ENCODE measurements at regions of chr19 and their contacts with region 1.

Region 1: GRCh38 chr19:21396893-21397572 is at the start of gene ZNF493:
- DNase-seq: peak; percentile 99
- H3K4me3 Mint-ChIP-seq: peak within 1 kb of the TSS; percentile 93
- H3K27ac Mint-ChIP-seq: peak within 1 kb of the TSS; percentile 84
- H3K4me1 Mint-ChIP-seq: no peaks in the 10 kb centered on the region
- H3K27me3 Mint-ChIP-seq: no peaks in the 10 kb centered on the region
- CTCF ChIP-seq: no peak
- total RNA-seq, gene ZNF493: 8.7 and 12.4 TPM in 2 replicates

Region 2: DNA sequence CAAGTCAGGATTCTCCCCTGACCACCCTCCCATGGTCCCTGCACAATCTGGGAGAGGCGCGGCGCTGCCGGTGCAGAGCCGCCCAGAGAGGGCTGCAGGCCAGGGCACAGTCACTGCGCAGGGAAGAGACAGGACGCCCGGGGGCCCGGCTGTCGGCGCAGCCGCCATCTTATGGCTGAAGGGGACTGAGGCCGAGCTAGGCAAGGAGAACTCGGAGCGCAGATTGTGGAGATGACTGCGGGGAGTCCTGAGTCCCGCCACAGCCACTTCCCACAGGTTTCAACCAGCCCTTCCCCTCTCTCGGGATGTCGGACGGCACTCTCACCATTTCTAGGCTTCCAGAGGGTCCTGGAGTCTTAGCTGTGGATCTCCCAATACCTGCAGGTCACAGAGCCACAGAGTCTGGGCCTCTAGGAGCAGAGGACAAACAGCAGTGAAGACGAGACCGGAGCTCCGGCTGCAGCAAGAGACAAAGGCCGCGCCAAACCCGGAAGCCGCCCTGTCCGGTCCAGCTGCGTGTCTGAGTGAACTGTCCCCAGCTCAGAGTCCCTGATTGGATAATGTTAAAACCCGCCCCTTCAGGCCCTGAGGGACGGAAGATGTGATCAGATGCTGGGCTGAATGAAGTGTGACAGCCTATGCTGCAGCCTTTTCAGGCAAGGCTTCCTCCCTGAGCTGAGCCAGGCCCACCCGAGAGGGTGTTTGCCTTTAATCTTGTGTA is 68.0 kb before region 1 on chr19 and contains the start of gene ZNF708:
- CTCF ChIA-PET with region 1: interaction called, 5 read pairs
- POLR2A ChIA-PET with region 1: interaction called, 39 read pairs
- intact Hi-C with region 1: no loop called
- DNase-seq: peak; percentile 94
- H3K4me3 Mint-ChIP-seq: peak within 1 kb of the TSS; percentile 98
- H3K27ac Mint-ChIP-seq: peak within 1 kb of the TSS; percentile 99
- H3K4me1 Mint-ChIP-seq: peaks cover 5% of the 10 kb centered on the region
- H3K27me3 Mint-ChIP-seq: no peaks in the 10 kb centered on the region
- CTCF ChIP-seq: no peak
- total RNA-seq, gene ZNF708: 5.3 and 7.8 TPM in 2 replicates

Region 3: GRCh38 chr19:21358768-21359451 is 38.1 kb before region 1 on chr19 and contains the start of gene ZNF738:
- CTCF ChIA-PET with region 1: interaction called, 3 read pairs
- POLR2A ChIA-PET with region 1: interaction called, 27 read pairs
- intact Hi-C with region 1: no loop called
- DNase-seq: peak; percentile 92
- H3K4me3 Mint-ChIP-seq: peak within 1 kb of the TSS; percentile 81
- H3K27ac Mint-ChIP-seq: peak within 1 kb of the TSS; percentile 61
- H3K4me1 Mint-ChIP-seq: no peaks in the 10 kb centered on the region
- H3K27me3 Mint-ChIP-seq: no peaks in the 10 kb centered on the region
- CTCF ChIP-seq: no peak
- total RNA-seq, gene ZNF738: 3.4 and 4.3 TPM in 2 replicates

Region 4: GRCh38 chr19:21410166-21410565 is 13.1 kb after region 1 on chr19:
- CTCF ChIA-PET with region 1: interaction called, 4 read pairs
- POLR2A ChIA-PET with region 1: interaction called, 10 read pairs
- intact Hi-C with region 1: no loop called
- DNase-seq: no peak
- H3K4me3 Mint-ChIP-seq: no peak overlapping the region
- H3K27ac Mint-ChIP-seq: no peak overlapping the region
- H3K4me1 Mint-ChIP-seq: no peaks in the 10 kb centered on the region
- H3K27me3 Mint-ChIP-seq: no peaks in the 10 kb centered on the region
- CTCF ChIP-seq: no peak

Region 5: DNA sequence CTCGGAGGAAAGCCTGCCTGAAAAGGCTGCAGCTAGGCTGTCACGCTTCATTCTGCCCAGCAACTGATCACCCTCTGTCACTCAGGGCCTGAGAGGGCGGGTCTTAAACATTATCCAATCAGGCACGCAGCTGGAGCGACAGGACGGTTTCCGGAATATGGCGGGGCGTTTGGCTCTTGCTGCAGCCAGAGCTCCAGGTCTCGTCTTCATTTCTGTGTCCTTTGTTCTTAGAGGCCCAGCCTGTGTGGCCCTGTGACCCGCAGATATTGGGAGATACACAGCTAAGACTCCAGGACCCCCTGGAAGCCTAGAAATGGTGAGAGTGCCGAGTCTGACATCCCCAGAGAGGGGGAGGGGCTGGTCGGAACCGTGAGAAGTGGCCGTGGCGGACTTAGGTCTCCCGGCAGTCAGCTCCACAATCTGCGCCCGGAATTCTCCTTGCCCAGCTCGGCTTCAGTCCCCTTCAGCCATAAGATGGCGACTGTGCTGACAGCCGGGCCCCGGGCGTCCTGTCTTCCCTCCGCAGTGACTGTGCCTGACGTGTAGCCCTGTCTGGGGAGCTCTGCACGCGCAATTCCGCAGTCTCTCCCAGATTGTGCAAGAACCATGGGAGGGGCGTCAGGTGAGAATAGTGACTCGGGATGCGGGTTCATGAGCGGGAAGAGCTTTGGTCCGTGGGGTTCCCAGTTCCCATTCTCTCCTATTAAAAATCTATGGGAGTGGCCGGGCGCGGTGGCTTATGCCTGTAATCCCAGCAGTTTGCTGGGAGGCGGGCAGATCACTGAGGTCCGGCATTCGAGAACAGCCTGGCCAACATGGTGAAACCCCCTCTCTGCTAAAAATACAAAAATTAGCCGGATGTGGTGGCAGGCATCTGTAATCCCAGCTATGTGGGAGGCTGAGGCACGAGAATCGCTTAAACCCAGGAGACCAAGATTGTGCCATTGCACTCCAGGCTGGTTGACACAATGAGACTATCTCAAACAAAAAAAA is 108.7 kb after region 1 on chr19 and contains the start of gene ZNF429:
- CTCF ChIA-PET with region 1: no interaction called
- POLR2A ChIA-PET with region 1: interaction called, 29 read pairs
- intact Hi-C with region 1: no loop called
- DNase-seq: peak; percentile 90
- H3K4me3 Mint-ChIP-seq: peak within 1 kb of the TSS; percentile 92
- H3K27ac Mint-ChIP-seq: peak within 1 kb of the TSS; percentile 95
- H3K4me1 Mint-ChIP-seq: no peaks in the 10 kb centered on the region
- H3K27me3 Mint-ChIP-seq: no peaks in the 10 kb centered on the region
- CTCF ChIP-seq: no peak
- total RNA-seq, gene ZNF429: 3.7 and 4.0 TPM in 2 replicates

Region 6: DNA sequence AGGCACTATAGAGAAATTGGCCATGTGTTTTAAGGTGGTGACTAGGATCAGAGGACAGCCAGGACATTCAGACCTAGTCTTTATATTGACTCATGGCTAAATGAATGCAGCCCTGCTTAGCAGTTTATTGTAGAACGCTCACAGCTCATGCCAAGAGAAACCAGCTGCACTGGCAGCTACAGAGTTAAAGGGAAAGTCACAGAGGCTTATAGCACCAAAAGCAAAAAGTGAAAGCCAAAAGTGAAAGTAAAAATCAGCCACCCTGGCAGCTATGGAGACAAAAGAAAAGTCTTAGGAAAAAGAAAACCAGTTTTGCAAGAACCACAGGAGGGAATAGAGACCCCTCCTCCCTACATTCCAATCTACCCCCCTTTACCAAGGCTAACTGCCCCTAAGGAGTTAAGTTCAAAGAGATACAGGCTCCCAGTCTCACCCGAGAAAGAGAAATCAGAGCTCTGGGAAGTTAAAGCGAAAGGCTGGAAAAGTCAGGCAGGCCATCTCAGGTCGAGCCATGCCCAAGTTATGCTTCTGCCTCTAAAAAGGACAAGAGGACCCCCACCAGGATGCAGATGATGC is 207.4 kb after region 1 on chr19:
- CTCF ChIA-PET with region 1: no interaction called
- POLR2A ChIA-PET with region 1: interaction called, 11 read pairs
- intact Hi-C with region 1: no loop called
- DNase-seq: peak; percentile 11
- H3K4me3 Mint-ChIP-seq: peak overlapping the region; percentile 78
- H3K27ac Mint-ChIP-seq: peak overlapping the region; percentile 75
- H3K4me1 Mint-ChIP-seq: peaks cover 17% of the 10 kb centered on the region
- H3K27me3 Mint-ChIP-seq: no peaks in the 10 kb centered on the region
- CTCF ChIP-seq: no peak